GM10248 (cell line): ENCODE measurements at regions of chr22 and their contacts with region 1.

Region 1: GRCh38 chr22:23591201-23591791 is 11.2 kb upstream of the IGLL1 start:
- DNase-seq: peak; percentile 74
- CTCF ChIP-seq: peak; percentile 81

Region 2: GRCh38 chr22:23556016-23556620 is 35.2 kb before region 1 on chr22:
- CTCF ChIA-PET with region 1: interaction called, 5 read pairs
- POLR2A ChIA-PET with region 1: interaction called, 10 read pairs
- DNase-seq: peak; percentile 17
- CTCF ChIP-seq: no peak

Region 3: DNA sequence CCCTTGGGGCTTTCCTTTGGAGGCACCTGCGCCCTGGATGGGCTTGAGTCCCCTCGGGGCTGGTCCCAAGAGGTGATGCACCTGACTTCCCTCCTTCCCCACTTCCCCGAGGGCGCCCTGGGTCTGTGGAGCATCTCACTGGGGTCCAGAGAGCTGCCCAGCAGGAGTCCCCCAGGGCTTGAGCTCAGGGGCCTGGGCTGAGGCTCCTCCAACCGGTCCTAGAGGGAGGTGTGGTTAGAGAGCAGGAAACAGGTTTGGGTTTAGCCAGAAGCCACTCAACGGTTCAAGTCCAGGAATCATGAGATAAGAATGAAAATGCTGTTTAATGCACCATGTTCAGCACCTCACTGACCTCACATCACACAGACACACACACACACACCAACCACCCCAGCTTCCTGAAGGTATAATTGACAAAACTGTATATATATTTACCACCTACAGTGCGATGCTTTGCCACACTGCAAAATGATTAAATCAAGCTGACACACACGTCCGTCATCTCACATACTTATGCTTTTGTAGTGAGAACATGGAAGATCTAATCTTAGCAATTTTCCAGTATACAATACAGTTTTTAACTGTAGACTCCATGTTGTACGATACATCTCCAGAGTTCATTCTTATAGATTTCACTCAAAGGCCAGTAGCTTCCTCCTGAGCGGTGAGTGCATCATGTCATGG is 10.6 kb before region 1 on chr22:
- CTCF ChIA-PET with region 1: interaction called, 12 read pairs
- POLR2A ChIA-PET with region 1: no interaction called
- DNase-seq: no peak
- CTCF ChIP-seq: no peak